ENCODE measurements at regions of chr20 and their contacts with region 1.

Region 1: GRCh38 chr20:59988106-59988731 is 30.0 kb downstream of the CDH26 start:
- DNase-seq: peak; percentile 97
- ATAC-seq: peak; percentile 92
- H3K4me3 ChIP-seq: peak overlapping the region; percentile 44; the same call in 1 of the 2 replicates
- H3K27ac ChIP-seq: peak overlapping the region; percentile 73
- H3K4me1 ChIP-seq: peaks cover 36% of the 10 kb centered on the region
- H3K27me3 ChIP-seq: no peaks in the 10 kb centered on the region
- CTCF ChIP-seq: no peak

Region 2: GRCh38 chr20:60050158-60050947 is 62.1 kb after region 1 on chr20:
- CTCF ChIA-PET with region 1: interaction called, 20 read pairs
- POLR2A ChIA-PET with region 1: no interaction called
- intact Hi-C with region 1: loop called (anchors 1 kb)
- DNase-seq: peak; percentile 79
- ATAC-seq: peak; percentile 79
- H3K4me3 ChIP-seq: no peak overlapping the region
- H3K27ac ChIP-seq: no peak overlapping the region
- H3K4me1 ChIP-seq: peaks cover 10% of the 10 kb centered on the region
- H3K27me3 ChIP-seq: peaks cover 24% of the 10 kb centered on the region
- CTCF ChIP-seq: peak; percentile 83

Region 3: GRCh38 chr20:60214901-60215815 is 226.9 kb after region 1 on chr20:
- CTCF ChIA-PET with region 1: no interaction called
- POLR2A ChIA-PET with region 1: no interaction called
- intact Hi-C with region 1: no loop called
- DNase-seq: no peak
- ATAC-seq: no peak
- H3K4me3 ChIP-seq: no peak overlapping the region
- H3K27ac ChIP-seq: no peak overlapping the region
- H3K4me1 ChIP-seq: no peaks in the 10 kb centered on the region
- H3K27me3 ChIP-seq: peaks cover 47% of the 10 kb centered on the region
- CTCF ChIP-seq: no peak

Measured in PC-3 (cell line).